Right ventricle myocardium inferior (tissue), 1 donor: ENCODE measurements at regions of chr4 and their contacts with region 1.

Region 1: GRCh38 chr4:83455281-83456129 is at the starts of genes HELQ and MRPS18C:
- DNase-seq: peak; percentile 97
- ATAC-seq: peak; percentile 99
- total RNA-seq, gene HELQ: 13.6 TPM
- total RNA-seq, gene MRPS18C: 67.7 TPM

Region 2: DNA sequence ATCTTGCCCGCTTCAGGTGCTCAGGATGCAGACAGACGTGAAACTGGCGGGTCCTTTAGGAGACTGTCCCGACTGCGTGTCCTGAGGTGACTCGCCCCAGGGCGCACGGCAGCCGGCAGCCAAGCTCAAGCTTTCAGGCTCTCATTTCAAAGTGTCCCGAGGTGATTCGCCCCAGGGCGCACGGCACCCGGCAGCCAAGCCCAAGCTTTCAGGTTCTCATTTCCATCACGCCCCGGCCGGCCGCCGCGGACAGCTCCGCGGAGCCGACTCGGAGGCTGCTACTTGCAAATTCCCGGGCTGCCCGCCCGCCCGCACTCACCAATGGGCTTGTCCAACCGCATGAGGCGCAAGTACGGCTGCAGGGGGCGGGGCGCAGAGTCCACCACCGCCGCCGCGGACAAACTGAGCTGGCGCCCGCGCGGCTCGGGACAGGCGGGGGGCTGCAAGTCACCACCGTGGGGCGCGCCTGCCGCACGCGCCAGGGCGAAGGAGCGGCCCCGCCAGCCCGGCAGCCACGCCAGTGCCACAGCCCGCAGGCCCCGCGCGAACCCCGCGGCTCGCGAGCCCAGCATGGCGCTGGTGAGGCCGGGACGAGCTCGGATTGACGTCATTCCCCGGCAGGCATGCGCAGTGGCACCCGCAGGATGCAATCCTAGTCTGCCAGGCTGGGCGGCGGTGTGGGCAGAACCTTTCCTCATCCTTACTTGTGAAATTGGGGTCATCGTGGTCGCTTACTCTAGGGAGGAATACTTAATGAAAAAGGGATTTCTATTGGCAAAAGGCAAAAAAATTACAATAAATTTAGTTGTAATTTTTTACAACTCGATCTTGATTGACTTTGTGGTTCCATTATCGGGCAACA is 171.1 kb before region 1 on chr4 and contains the start of gene COQ2:
- intact Hi-C with region 1: loop called (anchors 10 kb)
- DNase-seq: peak; percentile 98
- ATAC-seq: peak; percentile 97
- total RNA-seq, gene COQ2: 27.3 TPM

Region 3: DNA sequence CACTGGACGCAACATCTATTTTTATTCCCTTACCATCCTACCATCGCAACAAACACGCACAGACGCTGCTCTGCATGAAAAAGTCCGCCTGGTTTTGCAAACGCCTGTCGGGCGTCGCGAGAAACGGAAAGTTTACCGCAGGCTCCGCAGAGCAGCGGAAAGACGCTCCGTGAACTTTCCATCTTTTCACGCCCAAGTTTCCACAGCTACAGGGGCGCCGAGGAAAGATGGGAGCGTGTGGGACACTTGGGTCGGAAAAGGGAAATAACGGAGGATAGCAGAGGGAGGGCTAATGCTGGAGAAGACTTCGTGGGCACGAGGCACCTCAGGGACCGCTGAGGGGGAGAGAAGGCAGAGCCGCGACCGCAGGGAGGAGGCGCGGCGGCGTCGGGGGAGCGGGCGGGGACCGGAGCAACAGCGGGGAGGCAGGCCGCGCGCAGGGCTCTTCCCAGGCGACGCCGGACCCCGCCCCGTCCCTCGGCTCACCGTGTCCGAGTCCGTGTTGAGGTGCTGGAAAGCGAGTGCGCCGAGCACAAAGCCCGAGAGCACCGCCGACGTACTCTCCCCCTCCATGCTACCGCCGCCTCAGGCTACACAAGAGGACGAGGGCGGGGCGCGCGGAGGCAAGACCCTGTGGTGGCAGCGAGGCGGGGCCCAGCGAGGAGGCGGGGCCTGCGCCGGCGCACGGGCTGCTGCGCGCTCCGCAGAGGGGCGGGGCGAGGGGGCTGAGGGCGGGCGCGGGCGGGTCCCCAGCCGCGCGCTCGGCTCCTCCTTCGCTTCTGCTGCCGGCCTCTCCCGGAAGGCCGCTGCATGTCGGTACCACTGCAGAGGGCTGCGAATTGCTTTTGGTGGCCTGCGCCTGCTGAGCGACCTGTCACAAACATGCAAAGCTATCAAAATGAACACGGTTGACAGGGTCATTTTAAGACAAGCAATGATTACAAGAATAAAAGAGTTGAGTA is 29.3 kb after region 1 on chr4 and contains the start of gene ABRAXAS1:
- intact Hi-C with region 1: loop called (anchors 1 kb)
- DNase-seq: peak; percentile 98
- ATAC-seq: peak; percentile 99
- total RNA-seq, gene ABRAXAS1: 6.3 TPM

Region 4: DNA sequence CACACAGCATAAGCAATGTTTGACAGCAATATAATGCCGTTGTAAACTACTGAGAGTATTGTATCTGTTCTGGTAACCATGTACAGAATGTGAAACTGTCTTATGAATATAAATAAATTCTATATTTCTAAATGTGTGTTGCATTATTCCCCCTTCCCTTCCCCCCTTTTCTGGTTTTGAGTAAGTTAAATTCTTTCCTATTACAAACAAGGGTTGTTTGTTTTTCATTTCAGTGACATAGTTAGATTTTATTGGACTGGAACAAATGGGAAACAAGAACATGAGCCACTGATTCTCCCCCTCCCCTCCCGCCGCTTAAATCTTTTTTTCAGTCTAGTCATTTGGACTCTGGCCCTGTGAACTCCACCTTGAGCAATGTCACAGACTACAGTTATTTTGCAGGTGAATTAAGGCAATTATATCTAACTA is 150.3 kb after region 1 on chr4:
- intact Hi-C with region 1: no loop called
- DNase-seq: no peak
- ATAC-seq: no peak